CD4-positive, alpha-beta T cell (primary cell): ENCODE measurements at regions of chr3 and their contacts with region 1.

Region 1: DNA sequence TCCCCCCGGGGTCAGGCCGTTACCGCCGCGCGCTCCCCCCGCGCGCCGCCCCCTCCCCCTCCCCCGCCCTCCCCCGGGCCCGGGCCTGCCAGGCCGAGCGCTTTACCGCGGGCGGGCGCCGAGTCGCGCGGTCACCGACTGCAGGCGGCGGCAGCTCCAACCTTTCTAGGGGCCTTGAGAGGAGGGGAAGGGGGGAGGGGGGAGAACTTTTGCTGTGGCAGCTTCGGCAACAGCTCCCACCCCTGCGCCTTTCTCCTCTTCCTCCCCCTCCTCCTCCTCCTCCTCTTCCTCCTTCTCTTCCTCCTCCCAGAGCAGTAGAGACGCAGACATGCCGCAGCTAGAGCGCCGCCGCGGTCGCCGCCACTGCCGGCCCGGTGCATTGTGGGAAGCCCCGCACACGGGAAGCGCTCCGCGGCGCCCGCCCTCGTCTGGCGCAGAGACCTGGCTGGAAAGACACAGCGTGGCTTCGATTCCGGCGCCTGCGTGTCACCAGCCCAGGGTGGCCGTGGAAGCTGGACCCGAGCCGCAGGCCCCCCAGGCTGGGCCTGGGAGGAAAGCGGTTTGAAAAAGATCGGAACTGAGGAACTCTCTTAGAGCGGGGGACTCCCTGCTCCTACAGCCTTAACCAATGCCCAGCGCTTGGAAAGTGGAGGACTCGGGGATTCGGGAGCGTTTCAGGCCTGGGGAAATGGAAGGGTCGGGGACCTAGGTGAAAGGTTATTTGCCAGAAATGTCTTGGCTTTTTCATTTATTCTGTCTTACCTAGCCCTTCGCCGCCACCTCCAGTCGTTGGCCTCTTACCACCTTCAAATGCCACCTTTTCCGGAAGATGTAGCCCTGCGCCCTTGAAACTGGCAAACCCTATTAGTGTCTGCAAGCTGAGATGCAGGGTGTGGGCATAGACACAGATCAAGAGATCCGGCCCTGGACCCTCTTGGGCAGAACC is at the start of gene ZNF148:
- DNase-seq: peak; percentile 83 to 96 (median 90)
- ATAC-seq: peak; percentile 90
- H3K4me3 ChIP-seq: peak within 1 kb of the TSS; percentile 87
- H3K4me3 Mint-ChIP-seq: peak within 1 kb of the TSS; percentile 98
- H3K27ac ChIP-seq: peak within 1 kb of the TSS; percentile 88 to 92
- H3K27ac Mint-ChIP-seq: peak within 1 kb of the TSS; percentile 99
- H3K4me1 ChIP-seq: peaks cover 33% of the 10 kb centered on the region
- H3K4me1 Mint-ChIP-seq: peaks cover 56% of the 10 kb centered on the region
- H3K27me3 ChIP-seq: no peaks in the 10 kb centered on the region
- H3K27me3 Mint-ChIP-seq: no peaks in the 10 kb centered on the region
- CTCF ChIP-seq: no peak
- total RNA-seq, gene ZNF148: 30.9 to 34.0 TPM

Region 2: DNA sequence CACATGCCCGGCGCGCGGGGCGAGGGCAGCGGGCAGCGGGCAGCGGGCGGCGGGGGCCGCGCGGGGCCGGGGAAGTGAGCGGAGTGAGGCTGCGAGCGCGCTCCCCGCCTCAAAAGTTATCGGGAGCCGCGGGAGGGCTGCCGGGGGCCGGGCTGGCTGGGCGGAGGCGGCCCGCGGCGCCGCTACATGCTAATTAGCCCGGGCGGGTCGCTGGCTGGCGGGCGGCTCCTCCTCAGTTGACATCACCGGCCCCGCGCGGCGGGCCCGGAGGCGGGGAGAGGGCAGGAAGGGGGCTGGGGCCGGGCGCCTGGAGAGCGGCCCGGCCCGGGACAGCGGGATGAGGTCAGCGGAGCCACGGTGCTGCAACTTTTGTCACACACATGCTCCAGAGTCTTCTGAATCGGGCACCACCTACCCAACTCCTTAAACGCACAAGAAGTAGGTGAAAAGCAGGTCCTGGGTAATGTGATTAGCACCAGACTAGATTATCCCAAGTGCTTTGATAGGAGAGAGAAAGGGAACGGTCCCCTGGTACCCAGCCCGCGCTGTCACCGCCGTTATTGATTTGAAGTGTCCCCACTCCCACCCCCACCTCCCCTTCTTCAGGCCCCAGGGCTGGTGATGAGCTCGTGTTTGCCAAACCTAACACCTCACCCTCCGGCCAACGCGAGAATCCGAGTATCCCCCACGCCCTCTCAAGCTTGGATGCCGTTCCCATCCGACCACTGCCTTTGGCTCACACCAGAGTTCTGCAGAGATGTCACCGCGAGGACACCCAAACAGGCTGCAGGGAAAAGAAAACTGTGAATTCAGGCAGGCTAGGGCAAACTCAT is 319.1 kb before region 1 on chr3 and contains the start of gene HEG1:
- CTCF ChIA-PET with region 1: no interaction called
- POLR2A ChIA-PET with region 1: interaction called, 5 read pairs
- intact Hi-C with region 1: loop called (anchors 5 kb)
- DNase-seq: peak; percentile 48 to 88 (median 73)
- ATAC-seq: peak; percentile 55
- H3K4me3 ChIP-seq: peak within 1 kb of the TSS; percentile 74
- H3K4me3 Mint-ChIP-seq: peak within 1 kb of the TSS; percentile 96
- H3K27ac ChIP-seq: peak within 1 kb of the TSS; percentile 74 to 86
- H3K27ac Mint-ChIP-seq: peak within 1 kb of the TSS; percentile 90
- H3K4me1 ChIP-seq: peaks cover 40% of the 10 kb centered on the region
- H3K4me1 Mint-ChIP-seq: peaks cover 45% of the 10 kb centered on the region
- H3K27me3 ChIP-seq: no peaks in the 10 kb centered on the region
- H3K27me3 Mint-ChIP-seq: peaks cover 5% of the 10 kb centered on the region
- CTCF ChIP-seq: no peak
- total RNA-seq, gene HEG1: 31.2 to 32.6 TPM

Region 3: DNA sequence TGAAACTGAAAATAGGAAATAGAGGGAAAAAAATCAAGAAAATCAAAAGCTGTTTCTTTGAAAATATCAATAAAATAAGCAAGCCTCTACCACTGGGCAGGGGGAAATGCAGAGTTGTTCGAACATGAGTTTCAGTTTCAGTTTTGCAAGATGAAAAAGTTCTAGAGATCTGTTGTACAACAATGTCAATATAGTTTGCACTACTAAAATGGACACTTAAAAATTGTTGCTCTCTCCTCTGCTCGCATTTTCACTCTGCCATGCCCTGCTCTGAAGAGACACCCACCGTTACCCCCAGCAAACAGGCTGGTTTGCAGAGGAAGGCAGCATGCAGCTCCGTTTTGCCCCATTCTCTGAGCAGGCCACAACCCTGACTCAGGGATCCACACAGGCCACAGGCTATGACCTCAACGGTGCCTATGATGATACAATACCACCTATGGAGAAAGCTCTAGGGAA is 64.6 kb before region 1 on chr3:
- CTCF ChIA-PET with region 1: no interaction called
- POLR2A ChIA-PET with region 1: interaction called, 20 read pairs
- intact Hi-C with region 1: loop called in 1 of 2 experiments (anchors 5 kb)
- DNase-seq: peak; percentile 10 to 66 (median 38)
- ATAC-seq: peak; percentile 90
- H3K4me3 ChIP-seq: peak overlapping the region; percentile 52
- H3K4me3 Mint-ChIP-seq: peak overlapping the region; percentile 91
- H3K27ac ChIP-seq: peak overlapping the region; percentile 30 to 63
- H3K27ac Mint-ChIP-seq: peak overlapping the region; percentile 98
- H3K4me1 ChIP-seq: peaks cover 9% of the 10 kb centered on the region
- H3K4me1 Mint-ChIP-seq: peaks cover 58% of the 10 kb centered on the region
- H3K27me3 ChIP-seq: no peaks in the 10 kb centered on the region
- H3K27me3 Mint-ChIP-seq: no peaks in the 10 kb centered on the region
- CTCF ChIP-seq: no peak

Region 4: DNA sequence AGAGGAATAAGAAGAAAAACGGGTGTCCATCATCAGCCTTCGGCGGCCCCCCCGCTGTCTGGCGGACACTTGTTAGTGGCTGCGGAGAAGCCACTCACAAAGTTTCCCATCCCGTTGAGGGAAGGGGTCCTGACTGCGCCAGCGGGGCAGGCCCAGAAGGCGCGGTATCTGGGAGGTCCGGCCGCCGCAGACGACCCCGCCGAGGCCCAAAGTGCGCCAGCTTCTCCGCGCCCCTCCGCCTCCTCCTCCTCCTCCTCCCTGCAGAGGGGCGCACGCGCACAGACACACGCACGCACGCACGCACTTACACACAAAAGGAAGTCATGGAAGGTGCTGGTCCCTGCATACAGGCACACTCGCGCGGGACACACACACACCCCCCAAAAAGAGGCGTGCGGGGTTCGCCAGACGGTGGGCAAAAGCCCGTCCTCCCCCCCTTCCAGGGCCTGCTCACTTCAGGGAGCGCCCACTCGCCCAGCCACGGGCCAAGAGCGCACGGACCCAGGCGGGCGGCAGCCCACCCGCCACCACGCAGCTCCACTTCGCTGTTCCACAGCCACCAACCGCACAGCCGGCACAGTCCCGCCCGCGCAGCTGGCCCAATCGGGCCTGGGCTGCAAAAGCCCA is 18.1 kb before region 1 on chr3:
- CTCF ChIA-PET with region 1: interaction called, 4 read pairs
- POLR2A ChIA-PET with region 1: interaction called, 41 read pairs
- intact Hi-C with region 1: loop called in 1 of 2 experiments (anchors 2 kb)
- DNase-seq: peak; percentile 35 to 81 (median 52)
- ATAC-seq: peak; percentile 98
- H3K4me3 ChIP-seq: peak overlapping the region; percentile 55
- H3K4me3 Mint-ChIP-seq: peak overlapping the region; percentile 72
- H3K27ac ChIP-seq: peak overlapping the region in 1 of 2 donors; percentile 61
- H3K27ac Mint-ChIP-seq: peak overlapping the region; percentile 75
- H3K4me1 ChIP-seq: peaks cover 26% of the 10 kb centered on the region
- H3K4me1 Mint-ChIP-seq: peaks cover 77% of the 10 kb centered on the region
- H3K27me3 ChIP-seq: no peaks in the 10 kb centered on the region
- H3K27me3 Mint-ChIP-seq: no peaks in the 10 kb centered on the region
- CTCF ChIP-seq: no peak

Region 5: DNA sequence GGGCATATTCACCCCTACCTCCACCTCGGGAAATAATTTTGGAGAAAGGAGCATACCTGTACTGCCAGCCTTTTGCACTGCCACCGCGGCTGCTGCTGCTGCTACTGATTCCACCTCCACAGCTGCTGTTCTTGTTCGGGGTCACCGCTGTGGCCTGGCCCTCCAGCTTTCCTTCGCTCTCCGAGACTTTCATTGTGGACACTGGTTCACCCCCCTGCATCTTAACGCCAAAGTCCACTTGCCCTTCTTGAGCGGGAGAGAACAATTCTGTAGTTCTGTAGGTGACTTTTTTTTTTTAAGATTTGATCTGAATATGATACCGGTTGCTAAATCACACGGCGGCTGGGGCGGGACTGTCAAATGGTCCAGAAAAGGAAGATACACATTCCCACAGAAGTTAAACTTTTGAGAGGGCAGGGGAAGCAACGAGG is 219.3 kb after region 1 on chr3:
- CTCF ChIA-PET with region 1: no interaction called
- POLR2A ChIA-PET with region 1: interaction called, 11 read pairs
- intact Hi-C with region 1: loop called in 1 of 2 experiments (anchors 2 kb)
- DNase-seq: no peak
- ATAC-seq: no peak
- H3K4me3 ChIP-seq: peak overlapping the region; percentile 92
- H3K4me3 Mint-ChIP-seq: peak overlapping the region; percentile 97
- H3K27ac ChIP-seq: peak overlapping the region; percentile 70 to 80
- H3K27ac Mint-ChIP-seq: peak overlapping the region; percentile 84
- H3K4me1 ChIP-seq: peaks cover 45% of the 10 kb centered on the region
- H3K4me1 Mint-ChIP-seq: peaks cover 46% of the 10 kb centered on the region
- H3K27me3 ChIP-seq: no peaks in the 10 kb centered on the region
- H3K27me3 Mint-ChIP-seq: no peaks in the 10 kb centered on the region
- CTCF ChIP-seq: no peak